Endothelial cell of umbilical vein (primary cell): ENCODE measurements at regions of chr2 and their contacts with region 1.

Region 1: DNA sequence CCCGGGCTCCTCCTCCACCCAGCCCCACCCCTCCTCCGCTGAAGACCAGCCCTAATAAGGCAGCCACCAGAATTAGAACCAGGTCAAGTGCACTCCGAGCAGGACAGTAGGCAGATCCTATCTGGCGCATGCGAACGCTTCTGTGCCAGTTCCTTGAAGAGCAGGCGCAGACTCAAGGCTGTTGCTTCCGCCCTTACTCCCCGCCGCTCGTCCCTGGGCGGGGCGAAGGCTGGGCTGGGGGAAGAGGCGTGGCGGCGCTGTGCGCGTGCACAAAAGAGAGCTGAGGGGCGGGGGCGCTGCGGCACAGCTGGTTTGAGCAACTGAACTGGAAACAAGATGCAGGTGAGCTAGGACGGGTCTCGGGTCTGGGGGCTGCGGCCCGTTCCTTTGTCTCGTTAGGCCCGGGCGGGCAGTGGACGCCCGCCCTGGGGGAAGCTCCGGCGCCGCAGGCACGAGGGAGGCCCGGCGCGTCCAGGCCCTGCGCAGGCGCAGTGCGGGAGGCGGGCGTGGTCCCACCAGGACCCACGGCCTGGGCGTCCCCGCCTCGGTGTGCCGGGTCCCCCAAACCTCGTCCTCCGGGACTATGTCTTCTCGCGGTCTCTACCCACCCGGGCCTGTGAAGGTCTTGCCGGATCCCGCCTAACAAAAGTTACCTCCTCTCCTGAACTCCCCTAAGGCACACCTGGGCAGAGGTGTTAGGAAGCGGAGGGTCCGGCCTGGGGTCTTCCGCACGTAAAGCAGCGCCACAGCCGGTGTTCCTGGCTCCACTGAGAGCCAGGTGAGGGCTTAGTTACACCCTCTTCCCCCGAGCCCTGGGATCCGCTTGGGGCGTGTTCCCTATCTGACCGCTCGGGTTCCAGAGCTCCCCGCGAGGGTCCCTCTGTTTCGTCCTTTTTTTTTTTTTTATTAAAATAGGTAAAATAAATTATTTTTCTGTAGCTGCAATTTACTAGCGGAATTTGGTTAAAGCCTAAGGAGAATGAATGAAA is at the start of gene PDCL3:
- DNase-seq: peak; percentile 98
- H3K4me3 ChIP-seq: peak within 1 kb of the TSS; percentile 69 to 92 (median 74)
- H3K27ac ChIP-seq: peak within 1 kb of the TSS; percentile 80
- H3K4me1 ChIP-seq: peaks cover 3% of the 10 kb centered on the region
- H3K27me3 ChIP-seq: no peaks in the 10 kb centered on the region
- CTCF ChIP-seq: peak; percentile 17 to 20
- POLR2A ChIP-seq: peak; percentile 77
- total RNA-seq, gene PDCL3: 32.3 and 32.8 TPM in 2 replicates

Region 2: GRCh38 chr2:100427628-100428258 is 135.3 kb before region 1 on chr2:
- CTCF ChIA-PET with region 1: interaction called, 8 read pairs
- POLR2A ChIA-PET with region 1: no interaction called
- dilution Hi-C with region 1: no loop called
- intact Hi-C with region 1: loop called (anchors 10 kb)
- DNase-seq: peak; percentile 52
- H3K4me3 ChIP-seq: no peak overlapping the region
- H3K27ac ChIP-seq: no peak overlapping the region
- H3K4me1 ChIP-seq: no peaks in the 10 kb centered on the region
- H3K27me3 ChIP-seq: peaks cover 9 to 11% of the 10 kb centered on the region in 2 experiments
- CTCF ChIP-seq: peak; percentile 27 to 35
- POLR2A ChIP-seq: no peak

Region 3: DNA sequence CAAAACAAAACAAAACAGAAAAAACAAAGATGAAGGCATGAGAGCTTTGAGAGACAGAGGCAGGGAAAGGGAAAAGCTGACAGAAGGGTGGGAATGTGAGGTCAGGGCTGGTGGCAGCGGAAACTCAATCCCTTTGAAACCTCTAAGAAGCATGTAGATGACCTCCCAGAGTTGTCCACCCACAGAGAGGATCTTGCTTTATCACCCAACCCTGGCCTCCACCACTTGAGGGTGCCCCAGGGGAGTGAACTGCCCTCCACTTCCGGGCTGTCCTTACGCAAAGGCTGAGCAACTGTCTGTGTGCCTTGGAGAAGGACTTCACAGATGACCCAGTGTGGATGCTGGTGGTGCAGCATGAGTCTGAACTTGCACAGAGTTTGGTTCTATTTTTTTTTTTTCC is 26.5 kb after region 1 on chr2:
- CTCF ChIA-PET with region 1: interaction called, 10 read pairs
- POLR2A ChIA-PET with region 1: interaction called, 4 read pairs
- dilution Hi-C with region 1: no loop called
- intact Hi-C with region 1: no loop called
- DNase-seq: no peak
- H3K4me3 ChIP-seq: no peak overlapping the region
- H3K27ac ChIP-seq: no peak overlapping the region
- H3K4me1 ChIP-seq: peaks cover 3% of the 10 kb centered on the region
- H3K27me3 ChIP-seq: peaks cover 0 to 1% of the 10 kb centered on the region in 2 experiments
- CTCF ChIP-seq: no peak
- POLR2A ChIP-seq: no peak